PC-3 (cell line): ENCODE measurements at regions of chr17 and their contacts with region 1.

Region 1: GRCh38 chr17:61680921-61681320 is 89.9 kb upstream of the NACA2 start:
- DNase-seq: no peak
- ATAC-seq: no peak
- H3K4me3 ChIP-seq: no peak overlapping the region
- H3K27ac ChIP-seq: no peak overlapping the region
- H3K4me1 ChIP-seq: peaks cover 3% of the 10 kb centered on the region; the same call in 1 of the 2 replicates
- H3K27me3 ChIP-seq: no peaks in the 10 kb centered on the region
- CTCF ChIP-seq: no peak

Region 2: DNA sequence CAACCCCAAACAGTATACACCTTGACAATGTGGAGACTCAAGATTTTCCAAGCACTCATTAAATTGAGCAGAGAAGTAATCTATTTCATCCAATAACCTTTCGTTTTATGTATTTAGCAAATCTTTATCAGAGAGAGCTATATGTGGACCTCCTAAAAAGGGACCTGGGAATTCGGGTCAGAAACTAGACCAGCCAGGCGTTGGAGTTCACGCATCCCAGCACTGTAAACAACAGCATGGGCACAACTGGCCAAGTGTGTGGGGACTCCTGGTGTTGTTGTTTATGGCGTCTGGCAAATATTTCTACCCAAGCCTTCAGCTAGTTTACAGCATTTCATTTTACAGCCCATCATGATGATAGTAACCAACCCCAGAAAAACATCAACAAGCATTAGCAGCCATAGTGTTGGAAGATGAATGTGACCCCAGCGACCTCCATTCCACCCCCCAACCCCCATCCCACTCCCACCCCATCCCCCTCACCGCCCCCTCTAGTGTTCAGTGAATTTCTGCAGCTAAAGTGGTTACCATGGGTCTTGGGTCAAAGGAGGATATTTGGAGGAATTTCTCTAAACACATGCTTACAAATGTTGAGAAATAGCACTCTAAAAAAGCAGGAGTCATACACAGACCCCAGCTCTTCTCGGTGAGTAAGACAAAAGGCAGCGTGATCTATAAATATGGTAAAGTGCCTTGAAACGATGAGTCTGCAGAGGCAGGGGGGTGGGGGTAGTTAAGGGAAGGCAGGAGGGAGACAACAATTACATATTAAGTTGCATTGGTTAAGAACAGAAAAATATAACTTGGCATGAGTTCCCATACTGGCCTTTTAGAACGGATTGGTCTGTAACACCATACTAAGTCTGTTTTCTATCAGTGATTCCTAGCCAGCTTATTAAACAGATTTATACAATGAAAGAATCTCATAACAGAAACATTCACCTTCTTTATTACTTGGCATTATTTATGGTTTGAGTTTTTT is 372.7 kb before region 1 on chr17:
- CTCF ChIA-PET with region 1: no interaction called
- POLR2A ChIA-PET with region 1: no interaction called
- intact Hi-C with region 1: no loop called
- DNase-seq: peak; percentile 75
- ATAC-seq: peak; percentile 81
- H3K4me3 ChIP-seq: no peak overlapping the region
- H3K27ac ChIP-seq: peak overlapping the region; percentile 55
- H3K4me1 ChIP-seq: peaks cover 25% of the 10 kb centered on the region
- H3K27me3 ChIP-seq: no peaks in the 10 kb centered on the region
- CTCF ChIP-seq: no peak

Region 3: DNA sequence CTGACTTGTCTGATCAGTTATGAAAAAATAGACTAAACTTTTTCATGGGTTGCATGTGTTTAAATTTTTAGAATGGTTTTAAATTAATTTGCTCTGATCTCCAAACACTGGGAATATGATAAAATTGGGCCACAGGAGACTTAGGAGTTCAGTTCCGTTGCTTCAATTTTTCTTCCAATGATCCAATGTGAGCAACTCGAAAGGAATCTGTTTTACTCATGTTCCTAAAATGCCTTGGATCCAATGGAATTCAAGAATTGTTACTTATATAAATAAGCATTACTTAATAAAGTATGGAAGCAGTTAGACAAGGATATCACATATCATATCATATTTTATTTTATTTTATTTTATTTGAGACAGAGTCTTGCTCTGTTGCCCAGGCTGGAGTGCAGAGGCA is 33.9 kb before region 1 on chr17:
- CTCF ChIA-PET with region 1: no interaction called
- POLR2A ChIA-PET with region 1: no interaction called
- intact Hi-C with region 1: loop called (anchors 5 kb)
- DNase-seq: peak; percentile 86
- ATAC-seq: peak; percentile 60
- H3K4me3 ChIP-seq: no peak overlapping the region
- H3K27ac ChIP-seq: no peak overlapping the region
- H3K4me1 ChIP-seq: peaks cover 20% of the 10 kb centered on the region
- H3K27me3 ChIP-seq: no peaks in the 10 kb centered on the region
- CTCF ChIP-seq: no peak